ENCODE measurements at regions of chr16 and their contacts with region 1.

Region 1: GRCh38 chr16:27401768-27402568 is at the start of gene IL21R:
- DNase-seq: peak; percentile 95
- ATAC-seq: peak; percentile 74
- H3K4me3 Mint-ChIP-seq: peak within 1 kb of the TSS; percentile 99
- H3K27ac Mint-ChIP-seq: peak within 1 kb of the TSS; percentile 96
- H3K4me1 Mint-ChIP-seq: peaks cover 37% of the 10 kb centered on the region
- H3K27me3 Mint-ChIP-seq: no peaks in the 10 kb centered on the region
- CTCF ChIP-seq: no peak
- total RNA-seq, gene IL21R: 95.6 to 97.2 TPM

Region 2: DNA sequence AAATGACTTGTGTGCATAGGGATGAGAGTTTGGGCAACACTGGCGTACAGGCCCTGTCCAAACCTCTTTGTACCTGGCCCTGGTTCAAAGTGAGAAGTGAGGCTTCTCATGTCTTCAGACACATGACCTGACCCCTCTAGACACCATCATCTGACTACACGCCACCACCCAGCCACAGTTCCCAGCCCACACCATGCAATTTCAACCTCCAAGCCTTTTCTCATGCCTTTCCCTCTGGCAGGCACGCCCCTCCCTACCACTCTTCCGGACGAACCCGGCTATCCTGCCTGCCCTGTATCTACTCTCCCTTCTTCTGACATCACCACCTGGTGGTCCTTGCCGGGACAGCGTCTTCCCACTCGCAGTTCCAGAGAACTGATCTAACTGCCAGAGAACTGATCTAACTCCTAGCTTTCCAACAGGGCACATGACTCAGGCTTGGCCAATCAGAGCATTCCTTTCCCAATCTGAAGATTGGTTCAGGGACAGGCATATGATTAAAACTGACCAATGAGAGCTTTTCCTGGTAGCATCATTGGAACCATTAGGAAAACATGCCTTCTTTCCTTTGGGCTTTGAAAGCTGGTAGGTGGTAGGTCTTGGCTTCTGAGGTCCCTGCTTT is 27.1 kb before region 1 on chr16:
- CTCF ChIA-PET with region 1: interaction called, 92 read pairs
- POLR2A ChIA-PET with region 1: interaction called, 145 read pairs
- intact Hi-C with region 1: loop called (anchors 2 kb)
- DNase-seq: peak; percentile 73
- ATAC-seq: peak; percentile 47
- H3K4me3 Mint-ChIP-seq: no peak overlapping the region
- H3K27ac Mint-ChIP-seq: no peak overlapping the region
- H3K4me1 Mint-ChIP-seq: peaks cover 41% of the 10 kb centered on the region
- H3K27me3 Mint-ChIP-seq: no peaks in the 10 kb centered on the region
- CTCF ChIP-seq: peak; percentile 47

Region 3: GRCh38 chr16:27387724-27388123 is 14.2 kb before region 1 on chr16:
- CTCF ChIA-PET with region 1: interaction called, 7 read pairs
- POLR2A ChIA-PET with region 1: interaction called, 145 read pairs
- intact Hi-C with region 1: no loop called
- DNase-seq: no peak
- ATAC-seq: peak; percentile 77
- H3K4me3 Mint-ChIP-seq: no peak overlapping the region
- H3K27ac Mint-ChIP-seq: no peak overlapping the region
- H3K4me1 Mint-ChIP-seq: peaks cover 17% of the 10 kb centered on the region
- H3K27me3 Mint-ChIP-seq: no peaks in the 10 kb centered on the region
- CTCF ChIP-seq: no peak

Region 4: GRCh38 chr16:27414758-27415431 is 12.9 kb after region 1 on chr16:
- CTCF ChIA-PET with region 1: interaction called, 6 read pairs
- POLR2A ChIA-PET with region 1: interaction called, 86 read pairs
- intact Hi-C with region 1: no loop called
- DNase-seq: no peak
- ATAC-seq: no peak
- H3K4me3 Mint-ChIP-seq: no peak overlapping the region
- H3K27ac Mint-ChIP-seq: peak overlapping the region; percentile 76
- H3K4me1 Mint-ChIP-seq: peaks cover 76% of the 10 kb centered on the region
- H3K27me3 Mint-ChIP-seq: no peaks in the 10 kb centered on the region
- CTCF ChIP-seq: no peak

Region 5: GRCh38 chr16:27426423-27427408 is 24.7 kb after region 1 on chr16:
- CTCF ChIA-PET with region 1: no interaction called
- POLR2A ChIA-PET with region 1: interaction called, 86 read pairs
- intact Hi-C with region 1: no loop called
- DNase-seq: peak; percentile 90
- ATAC-seq: peak; percentile 90
- H3K4me3 Mint-ChIP-seq: peak overlapping the region; percentile 64
- H3K27ac Mint-ChIP-seq: peak overlapping the region; percentile 92
- H3K4me1 Mint-ChIP-seq: peaks cover 84% of the 10 kb centered on the region
- H3K27me3 Mint-ChIP-seq: no peaks in the 10 kb centered on the region
- CTCF ChIP-seq: no peak

Measured in activated CD8-positive, alpha-beta T cell treated with anti-CD3 and anti-CD28 coated beads for 36 hours (primary cell).